ENCODE measurements at regions of chrX and their contacts with region 1.

Region 1: DNA sequence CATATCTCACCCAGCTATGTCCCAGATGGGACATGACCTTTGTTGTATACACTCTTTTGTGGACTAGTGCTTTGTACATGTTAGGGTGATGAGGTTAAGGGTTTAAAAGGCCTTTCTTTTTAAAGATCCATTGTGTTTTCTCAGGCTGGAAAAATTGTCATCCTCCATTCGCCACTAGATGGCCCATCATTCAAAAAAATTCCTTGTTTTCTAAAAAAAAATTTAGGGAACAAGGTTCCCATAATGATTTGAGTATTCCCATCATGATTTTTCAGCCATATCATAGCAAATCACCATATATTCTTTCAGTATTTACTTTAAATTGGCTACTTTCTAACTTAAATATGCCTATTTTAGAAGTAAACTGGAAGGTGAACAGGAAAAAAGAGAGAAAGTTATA is 91.9 kb upstream of the TMEM164 start:
- DNase-seq: no peak
- H3K4me3 ChIP-seq: no peak overlapping the region
- H3K27ac ChIP-seq: no peak overlapping the region
- H3K4me1 ChIP-seq: no peaks in the 10 kb centered on the region
- H3K27me3 ChIP-seq: no peaks in the 10 kb centered on the region
- CTCF ChIP-seq: peak; percentile 59

Region 2: GRCh38 chrX:109672239-109672638 is 238.8 kb before region 1 on chrX:
- intact Hi-C with region 1: no loop called
- DNase-seq: no peak
- H3K4me3 ChIP-seq: no peak overlapping the region
- H3K27ac ChIP-seq: peak overlapping the region; percentile 38
- H3K4me1 ChIP-seq: no peaks in the 10 kb centered on the region
- H3K27me3 ChIP-seq: no peaks in the 10 kb centered on the region
- CTCF ChIP-seq: no peak

Region 3: DNA sequence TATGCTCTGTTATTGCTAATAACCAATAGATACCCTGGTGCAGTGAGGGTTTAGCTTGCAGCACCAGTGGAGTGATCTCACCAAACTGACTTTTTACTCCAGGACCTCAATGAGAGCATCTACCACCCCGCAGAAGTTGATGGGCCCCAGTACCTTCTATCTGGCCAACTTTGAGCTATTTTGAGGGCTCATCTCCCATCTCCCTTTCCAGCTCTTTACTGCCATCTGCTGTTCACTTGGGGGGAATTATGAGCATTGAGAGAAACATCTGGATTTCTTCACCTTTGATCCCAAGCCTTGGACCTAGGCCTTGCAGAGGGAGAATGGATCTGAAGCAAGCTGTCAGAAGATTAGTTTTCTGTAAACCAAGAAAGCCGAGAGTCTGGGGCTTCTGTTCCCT is 235.5 kb after region 1 on chrX:
- intact Hi-C with region 1: loop called (anchors 5 kb)
- DNase-seq: no peak
- H3K4me3 ChIP-seq: no peak overlapping the region
- H3K27ac ChIP-seq: peak overlapping the region; percentile 33
- H3K4me1 ChIP-seq: peaks cover 43% of the 10 kb centered on the region
- H3K27me3 ChIP-seq: no peaks in the 10 kb centered on the region
- CTCF ChIP-seq: peak; percentile 61

Region 4: DNA sequence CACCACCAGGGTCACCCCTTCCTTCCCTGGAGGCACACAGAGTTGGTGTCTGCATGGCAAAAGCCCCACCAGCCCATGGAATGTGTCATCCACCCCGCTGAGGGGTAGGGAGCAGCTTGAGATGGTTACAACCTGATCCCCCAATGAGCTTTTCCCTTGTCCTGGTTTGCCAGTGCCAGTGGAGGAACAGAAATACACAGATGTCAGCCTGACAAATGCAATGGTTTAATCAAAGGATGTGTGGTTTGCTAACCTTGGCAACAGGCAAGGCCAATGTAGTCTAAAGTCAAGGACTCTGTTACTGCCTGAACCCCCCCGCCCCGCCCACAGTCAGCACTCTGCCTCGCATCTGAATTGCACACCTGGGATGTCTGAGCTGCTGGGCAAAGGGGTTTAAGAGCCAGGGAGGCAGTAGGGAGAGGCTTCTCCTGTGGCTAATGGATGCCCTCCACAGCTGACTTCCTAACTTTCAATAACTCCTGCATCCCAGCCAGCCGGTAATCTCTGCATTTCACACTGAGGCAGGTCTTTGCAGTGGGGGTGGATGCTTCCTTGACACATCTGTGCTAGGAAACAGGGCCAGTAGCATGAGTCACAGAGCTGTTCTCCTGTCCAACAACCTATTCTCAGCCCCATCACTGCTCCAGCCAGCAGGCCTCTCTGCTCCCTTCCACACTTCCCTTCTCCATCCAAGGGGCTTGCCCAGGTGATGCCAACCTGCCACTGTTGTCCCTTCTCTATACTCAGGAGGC is 269.3 kb after region 1 on chrX:
- intact Hi-C with region 1: no loop called
- DNase-seq: peak; percentile 22
- H3K4me3 ChIP-seq: no peak overlapping the region
- H3K27ac ChIP-seq: no peak overlapping the region
- H3K4me1 ChIP-seq: peaks cover 41% of the 10 kb centered on the region
- H3K27me3 ChIP-seq: no peaks in the 10 kb centered on the region
- CTCF ChIP-seq: no peak

Measured in left ventricle myocardium inferior (tissue), 1 donor.